SK-N-SH (cell line): ENCODE measurements at regions of chr6 and their contacts with region 1.

Region 1: DNA sequence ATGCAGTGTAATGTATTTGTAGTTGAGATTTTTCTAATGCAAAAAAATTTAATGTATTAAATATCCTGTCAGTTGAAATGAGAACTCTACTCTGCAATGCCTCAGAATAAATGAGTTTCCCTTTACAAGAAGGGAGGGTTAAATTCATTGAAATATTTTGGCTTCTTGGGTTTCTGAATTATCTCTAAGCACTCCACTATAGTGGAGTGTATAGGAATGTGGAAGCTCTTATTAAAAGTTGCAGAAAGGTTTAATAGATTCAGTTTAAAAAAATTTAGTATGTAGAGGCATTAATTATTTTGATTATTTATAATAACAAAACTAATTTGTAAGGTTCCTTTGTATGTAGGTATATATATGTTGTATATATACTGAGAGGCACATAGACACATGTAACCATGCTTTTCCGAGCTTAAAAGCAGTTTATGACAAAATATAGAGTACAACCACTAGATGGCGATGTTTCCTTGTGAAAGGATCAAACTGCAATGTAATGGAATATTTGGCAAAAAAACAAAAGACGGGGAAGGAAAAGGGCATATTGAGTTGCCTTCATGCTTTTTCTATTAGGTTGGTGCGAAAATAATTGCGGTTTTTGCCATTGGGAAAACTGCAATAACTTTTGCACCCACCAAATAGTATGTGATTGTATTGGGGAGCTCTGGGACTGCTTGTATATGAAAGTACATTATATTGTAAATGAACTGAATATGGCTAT is 144.2 kb downstream of the MYO6 start:
- DNase-seq: peak; percentile 51
- H3K4me3 ChIP-seq: no peak overlapping the region
- H3K27ac ChIP-seq: no peak overlapping the region
- H3K4me1 ChIP-seq: no peaks in the 10 kb centered on the region
- H3K27me3 ChIP-seq: no peaks in the 10 kb centered on the region
- CTCF ChIP-seq: peak; percentile 82
- EP300 ChIP-seq: no peak
- RAD21 ChIP-seq: peak; percentile 84

Region 2: DNA sequence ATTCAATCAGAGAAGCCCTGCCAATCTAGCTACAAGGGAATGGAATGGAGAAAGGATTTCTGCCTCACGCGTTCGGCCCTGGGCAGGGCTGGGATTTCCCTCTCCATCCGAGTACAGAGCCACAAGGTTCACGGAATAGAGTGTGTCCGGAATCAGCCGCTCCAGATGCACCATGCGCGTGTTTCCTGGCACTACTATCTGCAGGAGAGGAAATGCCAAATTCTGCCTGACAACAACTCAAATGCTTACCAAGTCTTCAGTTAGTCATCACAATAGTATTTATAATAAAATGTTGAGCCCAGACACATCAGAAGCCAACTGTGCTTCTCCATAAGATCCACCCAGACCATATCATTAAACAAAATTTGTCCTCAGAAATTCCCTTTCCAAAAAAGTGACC is 762.4 kb before region 1 on chr6:
- CTCF ChIA-PET with region 1: no interaction called
- POLR2A ChIA-PET with region 1: no interaction called
- DNase-seq: no peak
- H3K4me3 ChIP-seq: no peak overlapping the region
- H3K27ac ChIP-seq: no peak overlapping the region
- H3K4me1 ChIP-seq: no peaks in the 10 kb centered on the region
- H3K27me3 ChIP-seq: peaks cover 5% of the 10 kb centered on the region
- CTCF ChIP-seq: no peak
- EP300 ChIP-seq: no peak
- RAD21 ChIP-seq: no peak

Region 3: DNA sequence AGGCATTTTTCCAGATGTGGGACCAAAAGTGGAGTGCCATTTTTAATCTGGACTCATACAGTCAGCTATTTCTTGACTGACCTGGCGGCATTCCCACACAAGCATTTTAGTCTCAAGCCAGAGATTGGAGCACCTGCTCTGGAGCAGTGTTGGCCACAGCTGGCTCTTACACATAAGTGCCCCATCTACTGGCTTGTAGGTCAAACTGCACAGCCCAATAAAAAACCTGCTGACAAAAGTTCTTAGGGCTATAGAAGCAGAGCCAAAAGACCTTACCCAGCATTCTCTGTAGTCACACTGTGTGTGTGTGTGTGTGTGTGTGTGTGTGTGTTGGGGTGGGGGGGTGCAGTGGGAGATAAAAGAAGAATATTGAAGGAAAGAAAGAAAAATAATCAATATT is 330.2 kb before region 1 on chr6:
- CTCF ChIA-PET with region 1: no interaction called
- POLR2A ChIA-PET with region 1: no interaction called
- DNase-seq: peak; percentile 15
- H3K4me3 ChIP-seq: no peak overlapping the region
- H3K27ac ChIP-seq: no peak overlapping the region
- H3K4me1 ChIP-seq: no peaks in the 10 kb centered on the region
- H3K27me3 ChIP-seq: no peaks in the 10 kb centered on the region
- CTCF ChIP-seq: peak; percentile 53
- EP300 ChIP-seq: no peak
- RAD21 ChIP-seq: peak; percentile 31; the same call in 1 of the 2 replicates

Region 4: DNA sequence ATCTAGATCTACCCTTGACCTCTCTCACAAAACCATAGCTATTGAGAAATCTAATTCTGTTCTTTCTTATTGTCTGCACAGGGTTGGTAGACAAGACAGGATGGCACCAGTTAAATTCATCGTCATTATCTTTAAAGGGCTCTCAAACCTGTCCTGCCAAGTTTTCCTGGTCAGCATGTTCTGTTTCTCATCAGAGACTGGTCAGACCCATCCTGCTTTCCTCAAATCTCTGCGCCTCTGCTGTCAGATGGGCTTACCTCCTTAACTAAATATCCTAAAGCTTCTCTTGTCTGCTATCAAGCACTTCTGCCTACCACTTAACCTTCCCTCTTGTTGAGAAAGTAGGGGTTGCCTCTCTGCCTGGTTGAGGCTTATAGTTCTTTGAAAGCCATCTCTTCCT is 19.0 kb before region 1 on chr6:
- CTCF ChIA-PET with region 1: interaction called, 77 read pairs
- POLR2A ChIA-PET with region 1: no interaction called
- DNase-seq: no peak
- H3K4me3 ChIP-seq: no peak overlapping the region
- H3K27ac ChIP-seq: no peak overlapping the region
- H3K4me1 ChIP-seq: no peaks in the 10 kb centered on the region
- H3K27me3 ChIP-seq: no peaks in the 10 kb centered on the region
- CTCF ChIP-seq: no peak
- EP300 ChIP-seq: no peak
- RAD21 ChIP-seq: no peak

Region 5: DNA sequence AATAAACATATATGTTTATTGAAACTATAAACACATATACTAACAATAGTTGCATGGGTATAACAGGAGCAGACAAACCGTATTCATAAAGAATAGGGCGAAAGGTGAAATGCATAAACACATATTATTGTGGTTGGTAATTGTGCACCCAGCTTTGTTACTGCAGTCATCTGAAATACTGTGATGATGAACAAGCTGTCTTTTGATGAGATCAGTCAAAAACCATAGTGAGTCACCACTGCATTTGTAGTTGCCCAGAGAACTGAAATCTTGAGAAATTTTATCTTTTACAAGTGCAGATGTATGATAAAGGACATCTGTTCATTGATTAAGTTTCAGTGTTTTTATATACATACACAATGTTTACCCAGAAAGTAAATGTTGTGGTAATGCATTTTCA is 10.5 kb before region 1 on chr6:
- CTCF ChIA-PET with region 1: interaction called, 77 read pairs
- POLR2A ChIA-PET with region 1: no interaction called
- DNase-seq: no peak
- H3K4me3 ChIP-seq: no peak overlapping the region
- H3K27ac ChIP-seq: no peak overlapping the region
- H3K4me1 ChIP-seq: no peaks in the 10 kb centered on the region; a peak in 1 of 4 replicates
- H3K27me3 ChIP-seq: no peaks in the 10 kb centered on the region
- CTCF ChIP-seq: no peak
- EP300 ChIP-seq: no peak
- RAD21 ChIP-seq: no peak

Region 6: DNA sequence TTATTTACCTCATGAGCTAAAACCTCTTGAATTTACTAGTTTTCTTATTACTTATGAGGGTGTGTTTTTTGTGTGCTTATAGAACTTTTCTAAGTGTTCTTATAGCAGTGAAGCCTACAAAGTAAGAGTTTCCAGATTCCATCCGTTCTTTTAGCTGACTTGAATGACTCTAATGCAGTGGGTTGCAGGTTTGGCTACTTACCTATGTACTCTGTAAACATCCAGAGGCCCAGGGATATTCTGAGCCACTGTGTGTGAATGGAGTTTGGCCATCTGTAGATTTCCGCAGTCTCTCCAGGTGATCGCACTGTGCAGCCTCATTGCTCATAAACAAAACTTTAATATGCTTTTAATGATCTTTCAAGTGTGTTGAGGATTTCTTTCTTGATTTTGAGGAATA is 13.7 kb after region 1 on chr6:
- CTCF ChIA-PET with region 1: interaction called, 58 read pairs
- POLR2A ChIA-PET with region 1: no interaction called
- DNase-seq: no peak
- H3K4me3 ChIP-seq: no peak overlapping the region
- H3K27ac ChIP-seq: no peak overlapping the region
- H3K4me1 ChIP-seq: no peaks in the 10 kb centered on the region
- H3K27me3 ChIP-seq: no peaks in the 10 kb centered on the region
- CTCF ChIP-seq: no peak
- EP300 ChIP-seq: no peak
- RAD21 ChIP-seq: no peak

Region 7: DNA sequence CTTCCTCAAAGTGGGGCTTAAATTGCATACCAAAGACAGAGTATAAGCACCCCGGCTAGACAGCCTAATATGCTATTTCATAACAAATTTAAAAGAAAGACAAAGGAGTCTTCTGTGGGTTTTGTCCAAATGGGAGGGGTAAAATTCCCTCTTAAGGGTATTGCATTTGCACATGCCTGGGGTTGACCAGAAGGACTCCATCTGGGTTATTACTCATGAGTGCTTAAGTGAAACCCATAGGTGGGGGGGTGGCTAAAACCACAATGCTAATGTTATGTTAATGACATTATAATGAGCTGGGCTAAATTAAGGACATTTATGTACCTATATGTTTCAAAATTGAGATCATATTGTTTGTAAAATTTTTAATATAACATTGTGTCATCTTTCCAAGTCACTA is 164.3 kb after region 1 on chr6:
- CTCF ChIA-PET with region 1: no interaction called
- POLR2A ChIA-PET with region 1: no interaction called
- DNase-seq: no peak
- H3K4me3 ChIP-seq: no peak overlapping the region
- H3K27ac ChIP-seq: no peak overlapping the region
- H3K4me1 ChIP-seq: no peaks in the 10 kb centered on the region
- H3K27me3 ChIP-seq: no peaks in the 10 kb centered on the region
- CTCF ChIP-seq: no peak
- EP300 ChIP-seq: no peak
- RAD21 ChIP-seq: no peak

Region 8: GRCh38 chr6:76861403-76861802 is 968.2 kb after region 1 on chr6:
- CTCF ChIA-PET with region 1: interaction called, 14 read pairs
- POLR2A ChIA-PET with region 1: no interaction called
- DNase-seq: peak; percentile 16
- H3K4me3 ChIP-seq: no peak overlapping the region; a peak in 1 of 4 replicates
- H3K27ac ChIP-seq: no peak overlapping the region
- H3K4me1 ChIP-seq: no peaks in the 10 kb centered on the region
- H3K27me3 ChIP-seq: no peaks in the 10 kb centered on the region
- CTCF ChIP-seq: peak; percentile 55
- EP300 ChIP-seq: no peak
- RAD21 ChIP-seq: peak; percentile 39